PC-3 (cell line): ENCODE measurements at regions of chr1 and their contacts with region 1.

Region 1: DNA sequence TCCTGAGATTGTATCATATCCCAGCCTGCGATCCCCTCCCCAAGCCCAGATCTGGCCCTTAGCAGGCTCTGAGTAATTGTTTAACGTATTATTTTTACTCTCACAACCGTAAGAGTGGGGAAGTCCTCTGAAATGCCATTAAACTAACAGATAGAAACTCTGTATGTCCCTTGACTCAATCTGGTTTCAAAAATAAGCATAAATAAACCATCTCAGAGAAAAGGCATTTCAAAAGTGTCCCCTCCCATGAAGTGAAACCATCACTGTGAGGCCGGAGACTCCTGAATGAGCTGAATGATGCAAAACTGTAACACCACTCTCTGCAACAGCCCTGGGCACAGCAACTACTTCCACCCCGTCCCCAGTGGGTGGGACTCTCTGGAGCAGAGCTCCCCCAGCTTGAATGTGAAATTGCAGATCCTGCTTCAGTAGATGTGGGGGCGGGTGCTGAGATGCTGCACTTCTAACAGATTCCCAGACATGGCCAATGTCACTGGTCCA is 104.1 kb downstream of the SYF2 start:
- DNase-seq: no peak
- ATAC-seq: no peak
- H3K4me3 ChIP-seq: no peak overlapping the region
- H3K27ac ChIP-seq: no peak overlapping the region
- H3K4me1 ChIP-seq: no peaks in the 10 kb centered on the region
- H3K27me3 ChIP-seq: peaks cover 7% of the 10 kb centered on the region; the same call in 1 of the 2 replicates
- CTCF ChIP-seq: no peak

Region 2: DNA sequence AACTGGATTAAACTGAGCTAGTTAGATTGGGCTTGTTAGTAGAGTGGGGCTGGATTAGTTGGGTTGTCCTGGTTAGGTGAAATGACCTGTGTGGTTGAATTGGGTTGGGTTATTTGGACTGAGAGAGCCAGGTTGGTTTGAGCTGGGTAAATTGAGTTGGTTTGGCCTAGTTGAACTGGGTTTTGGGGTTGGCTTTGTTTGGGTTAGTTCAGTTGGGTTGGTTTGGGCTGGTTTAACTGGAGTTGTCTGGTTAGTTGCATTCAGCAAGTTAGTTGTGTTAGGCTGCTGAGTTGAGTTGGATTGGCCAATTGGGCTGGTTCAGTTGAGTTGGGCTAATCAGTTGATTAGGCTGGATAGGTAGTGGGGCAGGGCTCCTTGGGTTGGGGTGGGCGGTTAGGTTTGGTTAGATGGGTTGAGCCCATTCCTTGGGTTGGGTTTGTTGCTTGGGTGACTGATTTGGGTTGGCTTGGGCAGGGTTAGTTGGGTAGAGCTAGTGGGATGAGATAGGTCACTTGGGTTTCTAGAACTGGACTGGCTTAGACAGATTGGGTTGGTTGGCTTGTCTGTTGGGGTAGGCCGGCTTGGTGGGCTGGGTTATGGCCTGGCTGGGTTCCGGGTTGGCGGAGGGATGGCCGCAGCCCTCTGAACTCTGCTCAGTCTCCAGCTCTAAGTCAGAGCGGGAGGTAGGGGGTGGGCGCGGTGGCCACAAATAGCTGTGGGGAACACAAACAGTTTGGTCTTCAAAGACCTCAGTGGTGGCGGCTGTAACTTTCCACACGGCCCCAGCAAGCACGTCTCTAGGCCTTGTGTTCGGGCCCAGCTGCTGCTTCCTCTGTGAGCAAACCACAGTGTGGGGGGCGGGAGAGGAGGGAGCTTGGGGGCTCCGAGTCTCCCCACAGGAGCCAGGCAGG is 130.9 kb before region 1 on chr1:
- CTCF ChIA-PET with region 1: no interaction called
- POLR2A ChIA-PET with region 1: no interaction called
- intact Hi-C with region 1: no loop called
- DNase-seq: no peak
- ATAC-seq: no peak
- H3K4me3 ChIP-seq: no peak overlapping the region
- H3K27ac ChIP-seq: no peak overlapping the region
- H3K4me1 ChIP-seq: no peaks in the 10 kb centered on the region
- H3K27me3 ChIP-seq: peaks cover 12% of the 10 kb centered on the region
- CTCF ChIP-seq: no peak

Region 3: GRCh38 chr1:25182629-25183028 is 54.5 kb after region 1 on chr1:
- CTCF ChIA-PET with region 1: no interaction called
- POLR2A ChIA-PET with region 1: no interaction called
- intact Hi-C with region 1: no loop called
- DNase-seq: peak; percentile 42
- ATAC-seq: peak; percentile 29; the same call in 1 of the 2 replicates
- H3K4me3 ChIP-seq: no peak overlapping the region
- H3K27ac ChIP-seq: no peak overlapping the region
- H3K4me1 ChIP-seq: no peaks in the 10 kb centered on the region
- H3K27me3 ChIP-seq: no peaks in the 10 kb centered on the region
- CTCF ChIP-seq: no peak

Region 4: GRCh38 chr1:25469177-25469576 is 341.0 kb after region 1 on chr1:
- CTCF ChIA-PET with region 1: no interaction called
- POLR2A ChIA-PET with region 1: interaction called, 22 read pairs
- intact Hi-C with region 1: no loop called
- DNase-seq: peak; percentile 79
- ATAC-seq: peak; percentile 92
- H3K4me3 ChIP-seq: no peak overlapping the region
- H3K27ac ChIP-seq: peak overlapping the region; percentile 61
- H3K4me1 ChIP-seq: peaks cover 15% of the 10 kb centered on the region
- H3K27me3 ChIP-seq: no peaks in the 10 kb centered on the region
- CTCF ChIP-seq: no peak